Activated CD4-positive, alpha-beta T cell treated with anti-CD3 and anti-CD28 coated beads, Interleukin-2, amount 10 ng/mL, durations not matched to agents 24 days and 14 days (primary cell): ENCODE measurements at regions of chr6 and their contacts with region 1.

Region 1: GRCh38 chr6:25717866-25718740 is 36.4 kb upstream of the SLC17A4 start:
- DNase-seq: peak; percentile 56
- H3K4me3 Mint-ChIP-seq: no peak overlapping the region
- H3K27ac Mint-ChIP-seq: no peak overlapping the region
- H3K4me1 Mint-ChIP-seq: peaks cover 5% of the 10 kb centered on the region
- H3K27me3 Mint-ChIP-seq: peaks cover 21% of the 10 kb centered on the region

Region 2: DNA sequence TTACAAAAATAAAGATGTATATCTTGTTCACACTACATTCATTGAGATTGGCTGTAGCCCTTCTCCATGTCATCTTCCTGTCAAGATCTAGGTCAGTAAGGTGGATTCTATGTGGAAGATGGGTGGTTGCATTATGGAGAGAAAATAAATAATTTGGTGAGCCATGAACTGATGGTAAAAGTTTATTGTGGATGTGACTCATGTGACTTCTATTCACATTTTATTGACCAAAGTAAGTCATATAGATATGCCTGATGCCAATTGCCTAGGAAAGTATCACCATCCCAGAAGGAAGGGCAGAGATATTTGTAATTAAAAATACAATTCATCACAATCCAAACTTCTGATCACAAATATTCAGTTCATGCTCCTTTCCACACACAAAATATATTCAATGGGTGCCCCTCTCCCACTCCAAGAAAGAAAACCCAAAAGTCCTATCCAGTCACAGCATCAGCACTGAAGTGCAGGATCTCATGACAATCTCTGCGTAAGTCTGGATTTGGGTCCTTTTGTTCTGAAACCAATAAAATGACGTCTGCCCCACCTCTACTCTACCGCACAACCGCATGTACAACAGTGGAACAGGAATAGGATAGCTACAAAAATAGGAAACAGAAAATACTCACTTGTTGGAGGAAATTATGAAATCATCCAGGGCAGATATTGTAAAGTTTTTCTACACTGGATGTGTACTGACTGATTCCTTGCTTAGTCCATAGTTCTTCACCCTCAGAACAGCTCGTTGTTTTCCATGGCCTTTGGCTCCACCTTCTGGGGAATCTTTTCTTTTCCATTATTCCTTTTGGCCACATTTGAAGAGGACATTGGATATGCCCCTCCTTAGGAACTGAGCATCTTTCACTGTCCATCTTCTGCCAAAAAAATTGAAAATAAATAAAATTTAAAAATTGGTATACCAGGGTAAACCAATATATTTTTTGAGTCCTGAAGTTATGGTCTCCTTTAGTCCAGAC is 172.1 kb after region 1 on chr6:
- intact Hi-C with region 1: loop called (anchors 2 kb)
- DNase-seq: peak; percentile 72
- H3K4me3 Mint-ChIP-seq: no peak overlapping the region
- H3K27ac Mint-ChIP-seq: no peak overlapping the region
- H3K4me1 Mint-ChIP-seq: no peaks in the 10 kb centered on the region
- H3K27me3 Mint-ChIP-seq: peaks cover 12% of the 10 kb centered on the region

Region 3: GRCh38 chr6:26003102-26003694 is 285.1 kb after region 1 on chr6:
- intact Hi-C with region 1: loop called (anchors 5 kb)
- DNase-seq: peak; percentile 84
- H3K4me3 Mint-ChIP-seq: no peak overlapping the region
- H3K27ac Mint-ChIP-seq: no peak overlapping the region
- H3K4me1 Mint-ChIP-seq: peaks cover 14% of the 10 kb centered on the region
- H3K27me3 Mint-ChIP-seq: no peaks in the 10 kb centered on the region